WTC11 (cell line): ENCODE measurements at regions of chr1 and their contacts with region 1.

Region 1: DNA sequence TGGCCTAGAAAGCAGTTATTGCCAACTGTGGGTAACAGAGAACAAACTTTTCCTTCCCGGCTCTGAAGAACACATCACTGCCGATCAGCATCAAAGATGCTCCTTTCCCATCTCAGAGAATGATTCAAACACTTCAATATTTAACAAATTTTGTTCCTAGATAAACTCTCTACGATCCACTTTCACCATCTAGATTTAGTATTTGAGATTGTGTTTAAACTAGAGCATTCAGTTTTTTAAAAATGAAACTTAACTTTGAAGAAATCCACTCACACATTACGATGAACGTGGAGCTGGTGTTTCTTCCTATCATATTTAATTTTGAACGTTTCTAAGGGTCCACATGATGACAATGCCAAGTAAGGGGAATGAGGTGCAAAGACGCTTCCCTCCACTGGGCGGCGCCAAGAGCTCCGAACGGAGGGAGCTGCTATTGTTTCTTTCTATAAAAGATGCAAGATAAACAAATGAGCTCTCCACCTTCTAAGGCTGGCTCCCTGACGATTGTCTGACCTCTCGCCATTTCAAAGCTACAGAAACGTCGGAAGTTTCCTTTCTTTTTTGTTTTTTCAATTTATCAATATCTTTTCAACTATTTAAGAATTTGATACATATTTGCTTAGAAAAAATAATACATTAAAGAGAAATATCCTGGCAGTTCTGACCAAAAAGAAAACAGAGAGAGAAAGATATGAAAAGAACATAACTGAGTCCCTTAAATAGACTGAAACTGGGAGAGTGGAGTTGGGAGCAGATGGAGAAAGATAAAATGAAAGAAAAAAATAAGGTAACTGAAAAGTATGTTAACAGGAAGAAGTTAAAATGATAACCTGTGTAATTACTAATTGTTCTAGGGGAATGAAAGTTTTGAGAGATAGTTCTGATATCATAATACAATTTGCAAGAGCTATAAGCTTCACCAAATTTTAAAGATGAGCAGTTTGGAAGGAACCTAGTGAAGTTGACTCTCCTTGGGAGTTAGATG is 4.4 kb upstream of the BARHL2 start:
- DNase-seq: peak; percentile 83
- ATAC-seq: no peak
- H3K4me3 Mint-ChIP-seq: peak overlapping the region; percentile 38; the same call in 1 of the 2 replicates
- H3K27ac Mint-ChIP-seq: no peak overlapping the region
- H3K4me1 Mint-ChIP-seq: peaks cover 63% of the 10 kb centered on the region
- H3K27me3 Mint-ChIP-seq: peaks cover 99% of the 10 kb centered on the region
- CTCF ChIP-seq: peak; percentile 81

Region 2: GRCh38 chr1:90149101-90149500 is 572.4 kb before region 1 on chr1:
- CTCF ChIA-PET with region 1: no interaction called
- POLR2A ChIA-PET with region 1: no interaction called
- DNase-seq: peak; percentile 34
- ATAC-seq: peak; percentile 84
- H3K4me3 Mint-ChIP-seq: no peak overlapping the region
- H3K27ac Mint-ChIP-seq: no peak overlapping the region
- H3K4me1 Mint-ChIP-seq: no peaks in the 10 kb centered on the region
- H3K27me3 Mint-ChIP-seq: no peaks in the 10 kb centered on the region
- CTCF ChIP-seq: peak; percentile 42; the same call in 1 of the 2 replicates

Region 3: DNA sequence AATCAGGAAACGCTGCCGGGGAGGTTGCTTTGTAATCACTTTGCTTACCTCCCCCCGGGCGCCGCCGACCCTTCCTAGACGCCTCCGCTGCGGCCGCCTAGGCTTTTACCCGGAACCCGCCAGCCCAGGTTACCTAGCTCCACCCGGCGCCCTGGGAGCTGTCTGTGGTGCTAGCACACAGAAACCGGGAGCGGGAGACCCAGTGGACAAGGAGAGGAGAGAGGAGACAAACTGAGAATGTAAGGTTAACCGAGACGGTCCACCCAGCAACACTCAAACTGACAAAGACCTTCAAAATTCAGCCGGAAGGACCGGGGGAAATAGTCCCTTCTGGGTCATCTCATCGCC is 14.2 kb before region 1 on chr1:
- CTCF ChIA-PET with region 1: interaction called, 34 read pairs
- POLR2A ChIA-PET with region 1: interaction called, 4 read pairs
- DNase-seq: peak; percentile 87
- ATAC-seq: peak; percentile 73
- H3K4me3 Mint-ChIP-seq: peak overlapping the region; percentile 71
- H3K27ac Mint-ChIP-seq: no peak overlapping the region
- H3K4me1 Mint-ChIP-seq: peaks cover 68% of the 10 kb centered on the region
- H3K27me3 Mint-ChIP-seq: peaks cover 96% of the 10 kb centered on the region
- CTCF ChIP-seq: no peak

Region 4: DNA sequence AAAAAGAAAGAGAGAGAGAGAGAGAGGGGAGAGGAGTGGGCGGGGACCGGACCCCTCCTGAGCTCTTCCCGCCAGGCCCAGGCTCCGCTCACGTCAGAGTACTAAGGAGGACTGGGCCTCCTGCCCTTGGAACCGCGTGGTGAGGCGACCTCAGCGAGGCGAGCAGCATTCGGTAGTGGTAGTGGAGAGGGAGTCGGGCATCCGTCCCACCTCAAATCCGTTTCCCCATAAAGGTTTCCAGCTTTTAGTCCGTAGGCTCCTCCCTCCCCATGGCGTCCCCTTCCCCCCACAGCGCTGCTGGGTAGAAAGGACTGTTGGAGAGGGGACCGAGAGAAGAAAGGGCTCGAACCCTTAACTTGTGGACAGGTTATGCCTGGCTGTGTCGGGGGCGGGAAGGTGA is 120.0 kb after region 1 on chr1:
- CTCF ChIA-PET with region 1: interaction called, 14 read pairs
- POLR2A ChIA-PET with region 1: no interaction called
- DNase-seq: peak; percentile 51
- ATAC-seq: peak; percentile 56
- H3K4me3 Mint-ChIP-seq: peak overlapping the region; percentile 62
- H3K27ac Mint-ChIP-seq: no peak overlapping the region
- H3K4me1 Mint-ChIP-seq: peaks cover 60% of the 10 kb centered on the region
- H3K27me3 Mint-ChIP-seq: peaks cover 86% of the 10 kb centered on the region
- CTCF ChIP-seq: no peak

Region 5: DNA sequence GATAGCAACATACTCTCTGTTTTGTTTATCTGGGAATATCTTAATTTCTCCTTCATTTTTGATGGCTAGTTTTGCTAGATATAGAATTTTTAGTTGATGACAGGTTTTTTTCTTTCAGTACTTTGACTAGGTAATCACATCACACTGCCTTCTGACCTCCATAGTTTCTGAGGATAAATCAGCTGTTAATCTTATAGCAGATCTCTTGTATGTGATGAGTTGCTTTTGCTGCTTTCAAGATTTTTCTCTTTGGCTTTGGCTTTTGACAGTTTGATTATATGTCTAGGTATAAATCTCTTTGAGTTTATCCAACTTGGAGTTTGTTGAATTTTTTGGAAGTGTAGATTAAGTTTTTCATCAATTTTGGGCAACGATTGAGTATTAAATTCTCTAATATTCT is 157.8 kb after region 1 on chr1:
- CTCF ChIA-PET with region 1: no interaction called
- POLR2A ChIA-PET with region 1: no interaction called
- DNase-seq: no peak
- ATAC-seq: no peak
- H3K4me3 Mint-ChIP-seq: no peak overlapping the region
- H3K27ac Mint-ChIP-seq: no peak overlapping the region
- H3K4me1 Mint-ChIP-seq: no peaks in the 10 kb centered on the region
- H3K27me3 Mint-ChIP-seq: peaks cover 4% of the 10 kb centered on the region; the same call in 1 of the 2 replicates
- CTCF ChIP-seq: no peak

Region 6: DNA sequence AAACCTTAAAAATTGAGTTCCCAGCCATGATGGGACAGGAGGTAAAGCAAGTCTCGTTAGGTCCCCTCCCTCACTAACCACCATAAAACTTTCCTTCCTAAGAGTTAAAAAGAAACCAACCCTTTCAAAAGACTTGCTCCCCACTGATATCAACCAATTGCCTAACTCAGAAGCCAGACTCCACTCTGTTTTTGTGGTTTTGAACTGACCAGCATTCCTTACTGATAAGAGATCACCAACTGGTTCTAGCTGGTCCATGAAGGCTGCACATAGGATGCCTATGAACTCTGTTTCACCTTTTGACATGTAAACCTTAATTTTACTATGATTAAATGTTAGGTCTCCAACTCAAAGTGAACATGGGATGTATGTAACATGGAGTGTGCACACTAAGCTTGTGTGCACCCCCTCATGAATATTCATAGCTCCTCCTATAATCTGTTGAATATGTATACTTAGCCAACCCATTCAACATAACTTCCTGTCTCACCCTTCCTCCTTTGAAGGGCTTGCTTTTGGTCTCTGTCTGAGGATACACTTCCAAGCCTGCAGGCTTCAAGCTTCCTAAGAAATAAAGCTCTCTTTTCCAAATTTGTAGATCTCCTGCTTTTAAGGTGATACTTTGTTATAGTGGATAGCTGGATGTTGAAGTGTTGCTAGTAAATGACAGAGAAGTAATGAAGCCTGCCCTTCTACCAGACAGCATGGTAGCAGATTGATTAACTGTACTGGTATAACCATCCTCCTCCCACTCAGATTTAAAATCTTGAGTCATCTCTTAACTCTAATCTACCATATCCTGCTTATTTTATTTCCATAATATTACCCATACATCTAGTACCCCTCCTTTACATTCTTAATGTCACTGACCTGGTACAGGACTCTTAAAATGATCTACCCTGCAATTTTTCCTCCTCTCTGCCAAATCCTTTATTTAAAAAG is 204.7 kb after region 1 on chr1:
- CTCF ChIA-PET with region 1: interaction called, 11 read pairs
- POLR2A ChIA-PET with region 1: no interaction called
- DNase-seq: no peak
- ATAC-seq: peak; percentile 30
- H3K4me3 Mint-ChIP-seq: peak overlapping the region; percentile 38
- H3K27ac Mint-ChIP-seq: peak overlapping the region; percentile 96
- H3K4me1 Mint-ChIP-seq: peaks cover 72% of the 10 kb centered on the region
- H3K27me3 Mint-ChIP-seq: no peaks in the 10 kb centered on the region
- CTCF ChIP-seq: no peak

Region 7: DNA sequence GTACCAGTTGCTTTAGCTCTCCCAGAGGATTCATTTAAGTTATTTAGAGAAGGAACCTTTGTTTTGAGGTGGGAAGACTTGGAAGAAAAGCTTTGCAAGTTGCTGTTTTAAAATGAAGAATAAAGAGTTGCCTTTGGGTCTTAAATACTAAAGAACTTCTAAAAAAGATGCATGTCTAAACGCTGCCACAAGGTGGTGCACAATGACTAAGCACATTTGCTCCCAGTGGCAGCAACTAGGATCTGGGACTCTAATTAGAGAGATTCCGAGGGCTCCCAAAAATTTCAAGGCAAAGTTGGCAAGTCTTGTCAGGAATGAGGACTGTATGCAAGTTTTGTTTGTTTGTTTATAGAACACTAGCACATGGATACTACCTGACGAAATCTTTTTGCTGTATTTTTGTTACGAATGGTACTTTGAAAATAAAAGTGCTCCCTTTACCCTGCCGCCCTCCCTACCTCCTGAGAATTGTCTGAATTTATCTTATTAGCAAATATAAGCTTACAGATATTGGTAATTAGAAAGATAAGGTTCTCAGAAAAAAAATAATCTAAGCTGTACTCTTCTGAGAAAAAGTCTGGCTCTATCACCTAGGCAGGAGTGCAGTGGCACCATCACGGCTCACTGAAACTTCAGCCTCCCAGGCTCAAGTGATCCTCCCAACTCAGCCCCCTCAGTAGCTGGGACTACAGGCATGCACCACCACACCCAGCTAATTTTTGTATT is 561.4 kb after region 1 on chr1:
- CTCF ChIA-PET with region 1: interaction called, 13 read pairs
- POLR2A ChIA-PET with region 1: no interaction called
- DNase-seq: peak; percentile 62
- ATAC-seq: peak; percentile 65
- H3K4me3 Mint-ChIP-seq: no peak overlapping the region
- H3K27ac Mint-ChIP-seq: 0 out of 2 replicates have a peak overlapping the region, but pooled peaks have one; percentile 12
- H3K4me1 Mint-ChIP-seq: peaks cover 12% of the 10 kb centered on the region
- H3K27me3 Mint-ChIP-seq: no peaks in the 10 kb centered on the region
- CTCF ChIP-seq: peak; percentile 58